Right cardiac atrium (tissue), 5 donors: ENCODE measurements at regions of chr7 and their contacts with region 1.

Region 1: GRCh38 chr7:107579885-107580715 is at the start of gene BCAP29:
- DNase-seq: peak; percentile 83 to 92 (median 90)
- ATAC-seq: peak; percentile 98
- H3K4me3 ChIP-seq: peak within 1 kb of the TSS; percentile 82
- H3K27ac ChIP-seq: peak within 1 kb of the TSS; percentile 95
- H3K4me1 ChIP-seq: peaks cover 2% of the 10 kb centered on the region
- H3K27me3 ChIP-seq: no peaks in the 10 kb centered on the region
- total RNA-seq, gene BCAP29: 91.8 to 107 (median 103) TPM

Region 2: DNA sequence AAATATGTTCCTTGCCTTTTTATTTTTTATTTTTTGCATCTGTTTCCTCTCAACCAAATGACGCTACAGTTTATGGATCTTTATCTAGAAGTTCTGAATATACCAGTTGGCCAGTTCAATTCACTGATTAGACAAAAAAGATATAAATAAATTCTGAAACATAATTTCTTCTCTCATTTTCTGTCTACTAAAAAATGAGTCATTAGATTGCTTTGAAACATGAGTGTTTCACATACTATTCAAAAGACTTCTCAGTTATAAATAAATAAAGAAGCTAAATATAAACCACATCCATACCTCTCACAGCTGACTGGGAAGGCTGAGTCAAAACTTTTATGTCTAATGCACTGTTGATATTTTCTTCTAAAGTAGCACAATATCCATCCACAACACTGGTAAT is 207.8 kb before region 1 on chr7:
- intact Hi-C with region 1: no loop called
- DNase-seq: no peak
- ATAC-seq: no peak
- H3K4me3 ChIP-seq: no peak overlapping the region
- H3K27ac ChIP-seq: no peak overlapping the region
- H3K4me1 ChIP-seq: no peaks in the 10 kb centered on the region
- H3K27me3 ChIP-seq: no peaks in the 10 kb centered on the region

Region 3: DNA sequence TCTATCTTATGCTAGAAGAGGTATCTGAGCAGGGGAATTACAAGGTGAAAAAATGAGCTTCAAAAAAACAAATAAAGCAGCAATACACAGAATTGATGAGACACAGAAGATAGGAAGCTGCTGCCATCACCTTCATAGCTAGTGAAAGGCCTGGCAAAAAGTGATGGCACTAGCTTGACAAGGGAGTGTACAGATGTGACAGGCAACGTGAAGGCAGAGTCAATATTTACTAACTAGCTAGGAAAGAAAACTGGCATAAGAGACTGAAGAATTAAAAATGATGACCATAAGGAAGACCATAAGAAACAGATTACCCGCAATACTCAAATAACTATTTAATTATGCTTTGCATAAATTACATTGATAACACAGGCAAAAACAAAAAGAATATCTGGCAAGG is 100.8 kb before region 1 on chr7:
- intact Hi-C with region 1: loop called in 1 of 4 experiments (anchors 5 kb)
- DNase-seq: no peak
- ATAC-seq: peak; percentile 48 to 64
- H3K4me3 ChIP-seq: no peak overlapping the region
- H3K27ac ChIP-seq: no peak overlapping the region
- H3K4me1 ChIP-seq: no peaks in the 10 kb centered on the region
- H3K27me3 ChIP-seq: no peaks in the 10 kb centered on the region

Region 4: GRCh38 chr7:107836237-107837144 is 256.4 kb after region 1 on chr7:
- intact Hi-C with region 1: no loop called
- DNase-seq: no peak
- ATAC-seq: peak in 1 of 2 donors; percentile 79
- H3K4me3 ChIP-seq: no peak overlapping the region
- H3K27ac ChIP-seq: no peak overlapping the region
- H3K4me1 ChIP-seq: no peaks in the 10 kb centered on the region
- H3K27me3 ChIP-seq: no peaks in the 10 kb centered on the region